ENCODE measurements at regions of chr7 and their contacts with region 1.

Region 1: GRCh38 chr7:35593896-35594295 is 101.0 kb downstream of the HERPUD2 start:
- H3K4me3 ChIP-seq: no peak overlapping the region
- H3K27ac ChIP-seq: no peak overlapping the region
- H3K4me1 ChIP-seq: 0 out of 2 replicates have a peak, but pooled peaks cover 3% of the 10 kb centered on the region
- CTCF ChIP-seq: no peak

Region 2: DNA sequence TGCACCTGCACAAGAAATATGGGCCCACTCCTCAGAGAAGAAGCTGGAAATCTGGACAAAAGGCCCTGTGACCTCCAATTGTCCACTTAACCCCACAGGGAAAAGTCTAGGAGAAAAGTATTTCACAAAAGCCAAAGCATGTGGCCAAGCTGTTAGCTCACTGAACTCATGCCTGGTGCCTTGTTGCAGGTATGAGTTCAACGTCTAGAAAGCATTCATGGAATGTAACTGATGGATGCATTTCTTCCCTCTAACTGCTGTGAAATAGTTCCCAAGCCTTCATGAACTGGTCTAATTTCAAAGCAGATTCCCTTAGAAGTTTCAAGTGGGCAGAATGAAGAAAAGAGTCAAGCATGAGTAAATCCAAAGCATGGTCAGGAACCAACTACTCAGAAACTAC is 15.4 kb before region 1 on chr7:
- CTCF ChIA-PET with region 1: interaction called, 14 read pairs
- POLR2A ChIA-PET with region 1: no interaction called
- H3K4me3 ChIP-seq: no peak overlapping the region
- H3K27ac ChIP-seq: no peak overlapping the region
- H3K4me1 ChIP-seq: no peaks in the 10 kb centered on the region
- CTCF ChIP-seq: no peak